ENCODE measurements at regions of chr17 and their contacts with region 1.

Region 1: DNA sequence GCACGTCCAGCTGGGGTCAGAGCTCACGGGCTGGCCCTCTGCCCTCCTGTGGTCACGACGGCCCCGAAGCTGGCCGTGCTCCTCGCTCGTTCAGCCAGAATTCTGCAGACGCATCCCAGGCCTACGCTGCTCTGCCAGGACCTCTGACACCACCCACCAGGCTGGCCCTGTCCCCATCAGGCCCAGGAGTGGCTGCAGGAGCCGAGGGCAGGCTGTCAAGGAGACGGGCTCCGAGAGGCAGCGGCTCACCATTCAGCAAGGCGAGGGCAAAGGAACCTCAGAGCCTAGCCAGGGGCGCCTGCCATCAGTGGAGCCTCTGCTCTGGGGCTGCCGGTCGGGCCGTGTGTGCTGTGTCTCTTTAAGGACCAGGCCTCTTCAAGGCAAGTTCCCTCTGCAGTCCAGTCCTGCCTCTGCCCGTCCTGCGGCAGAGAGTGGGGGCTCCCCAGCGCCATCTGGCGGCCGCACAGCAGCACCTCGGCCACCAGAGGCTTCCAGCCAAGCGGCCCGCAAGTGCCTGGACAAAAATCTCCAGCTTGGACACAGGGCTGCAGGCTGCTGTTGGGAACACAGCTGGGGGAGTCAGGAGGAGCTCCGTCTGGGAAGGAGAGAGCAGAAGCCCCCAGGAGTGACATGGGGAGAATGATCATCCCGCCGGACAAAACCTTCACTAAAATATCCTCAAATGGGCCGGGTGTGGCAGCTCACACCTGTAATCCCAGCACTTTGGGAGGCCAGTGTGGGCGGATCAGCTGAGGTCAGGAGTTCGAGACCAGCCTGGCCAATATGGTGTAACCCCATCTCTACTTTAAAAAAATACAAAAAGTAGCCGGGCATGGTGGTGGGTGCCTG is 7.4 kb upstream of the ABR start:
- DNase-seq: peak; percentile 58 to 76
- ATAC-seq: peak; percentile 80 to 87
- H3K4me3 ChIP-seq: peak overlapping the region in 3 of 4 donors; percentile 10 to 47 (median 28)
- H3K27ac ChIP-seq: peak overlapping the region; percentile 47 to 68 (median 49)
- H3K4me1 ChIP-seq: peaks cover 22 to 32% of the 10 kb centered on the region in 2 donors
- H3K27me3 ChIP-seq: peaks cover 0 to 8% (median 0%) of the 10 kb centered on the region in 3 donors
- CTCF ChIP-seq: peak; percentile 92 to 99 (median 97)
- POLR2A ChIP-seq: no peak

Region 2: GRCh38 chr17:622356-622755 is 564.8 kb before region 1 on chr17:
- in situ Hi-C with region 1: no loop called
- intact Hi-C with region 1: no loop called
- DNase-seq: no peak
- ATAC-seq: no peak
- H3K4me3 ChIP-seq: no peak overlapping the region
- H3K27ac ChIP-seq: no peak overlapping the region
- H3K4me1 ChIP-seq: no peaks in the 10 kb centered on the region
- H3K27me3 ChIP-seq: no peaks in the 10 kb centered on the region
- CTCF ChIP-seq: no peak
- POLR2A ChIP-seq: no peak

Region 3: DNA sequence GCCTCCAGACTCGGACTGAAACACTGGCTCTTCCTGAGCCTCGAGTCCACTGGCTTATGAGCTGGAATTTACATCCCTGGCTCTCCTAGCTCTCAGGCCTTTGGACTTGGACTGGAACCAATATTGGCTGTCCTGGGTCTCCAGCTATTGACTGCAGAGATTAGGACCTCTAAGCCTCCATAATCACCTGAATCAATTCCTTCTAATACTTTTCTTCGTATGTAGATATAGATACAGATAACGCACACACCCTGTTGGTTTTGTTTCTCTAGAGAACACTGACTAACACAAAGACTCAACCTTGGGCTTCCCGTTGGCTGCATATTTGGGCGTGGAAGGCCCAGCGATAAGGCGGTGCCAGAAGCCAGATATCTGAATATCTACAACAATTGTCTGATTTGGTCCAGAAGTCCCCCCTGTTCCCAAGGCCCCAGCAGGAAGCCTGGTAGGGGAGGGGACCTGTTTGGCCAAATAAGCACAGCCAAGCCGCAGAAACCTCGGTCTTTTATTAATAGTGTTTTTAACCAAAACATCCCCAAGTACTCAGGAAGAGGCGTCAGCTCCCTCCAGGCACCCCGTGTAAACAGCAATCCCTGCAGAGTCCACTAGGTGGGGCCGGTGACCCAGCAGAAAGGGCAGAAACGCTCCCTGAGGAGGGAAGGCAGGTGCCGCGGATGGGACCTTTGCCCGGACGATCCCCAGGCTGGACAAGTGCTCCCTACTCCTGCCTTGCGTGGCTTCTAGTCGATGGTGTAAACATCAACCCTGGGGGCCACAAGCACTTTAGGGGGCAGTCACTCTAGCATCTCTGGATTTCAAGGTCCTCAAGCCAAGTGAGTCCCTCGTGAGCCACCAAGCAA is 64.4 kb before region 1 on chr17:
- in situ Hi-C with region 1: loop called in 3 of 4 experiments (anchors 5 to 10 kb)
- intact Hi-C with region 1: loop called (anchors 1 kb)
- DNase-seq: peak; percentile 68 to 69
- ATAC-seq: peak; percentile 83 to 84
- H3K4me3 ChIP-seq: no peak overlapping the region
- H3K27ac ChIP-seq: peak overlapping the region; percentile 27 to 71 (median 62)
- H3K4me1 ChIP-seq: peaks cover 7 to 11% of the 10 kb centered on the region in 2 donors
- H3K27me3 ChIP-seq: peaks cover 0 to 9% (median 0%) of the 10 kb centered on the region in 3 donors
- CTCF ChIP-seq: peak; percentile 88 to 94 (median 92)
- POLR2A ChIP-seq: no peak

Region 4: DNA sequence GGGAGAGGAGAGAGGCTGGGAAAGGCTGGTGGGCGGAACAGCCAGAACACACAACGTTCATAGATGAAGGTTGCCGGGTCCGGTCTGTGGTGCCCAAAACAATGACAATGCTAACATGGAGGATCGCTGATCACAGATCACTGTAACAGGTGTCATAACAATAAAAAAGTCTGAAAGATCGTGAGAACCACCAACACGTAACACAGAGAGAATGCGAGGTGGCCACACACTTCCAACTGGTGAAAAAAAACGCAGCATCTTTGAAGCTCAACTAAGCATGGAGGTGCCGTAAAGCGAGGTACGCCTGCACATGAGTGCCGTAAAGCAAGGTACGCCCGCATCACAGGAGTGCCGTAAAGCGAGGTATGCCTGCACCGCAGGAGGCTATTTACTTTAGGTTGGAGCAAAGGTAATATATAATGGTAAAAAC is 49.7 kb before region 1 on chr17:
- in situ Hi-C with region 1: loop called in 1 of 4 experiments (anchors 10 kb)
- intact Hi-C with region 1: no loop called
- DNase-seq: no peak
- ATAC-seq: no peak
- H3K4me3 ChIP-seq: no peak overlapping the region
- H3K27ac ChIP-seq: no peak overlapping the region
- H3K4me1 ChIP-seq: peaks cover 3 to 10% of the 10 kb centered on the region in 2 donors
- H3K27me3 ChIP-seq: peaks cover 0 to 12% (median 5%) of the 10 kb centered on the region in 3 donors
- CTCF ChIP-seq: no peak
- POLR2A ChIP-seq: no peak

Region 5: GRCh38 chr17:1154704-1155103 is 32.4 kb before region 1 on chr17:
- in situ Hi-C with region 1: no loop called
- intact Hi-C with region 1: no loop called
- DNase-seq: no peak
- ATAC-seq: no peak
- H3K4me3 ChIP-seq: no peak overlapping the region
- H3K27ac ChIP-seq: no peak overlapping the region
- H3K4me1 ChIP-seq: no peaks in the 10 kb centered on the region
- H3K27me3 ChIP-seq: peaks cover 0 to 2% (median 0%) of the 10 kb centered on the region in 3 donors
- CTCF ChIP-seq: no peak
- POLR2A ChIP-seq: no peak

Region 6: DNA sequence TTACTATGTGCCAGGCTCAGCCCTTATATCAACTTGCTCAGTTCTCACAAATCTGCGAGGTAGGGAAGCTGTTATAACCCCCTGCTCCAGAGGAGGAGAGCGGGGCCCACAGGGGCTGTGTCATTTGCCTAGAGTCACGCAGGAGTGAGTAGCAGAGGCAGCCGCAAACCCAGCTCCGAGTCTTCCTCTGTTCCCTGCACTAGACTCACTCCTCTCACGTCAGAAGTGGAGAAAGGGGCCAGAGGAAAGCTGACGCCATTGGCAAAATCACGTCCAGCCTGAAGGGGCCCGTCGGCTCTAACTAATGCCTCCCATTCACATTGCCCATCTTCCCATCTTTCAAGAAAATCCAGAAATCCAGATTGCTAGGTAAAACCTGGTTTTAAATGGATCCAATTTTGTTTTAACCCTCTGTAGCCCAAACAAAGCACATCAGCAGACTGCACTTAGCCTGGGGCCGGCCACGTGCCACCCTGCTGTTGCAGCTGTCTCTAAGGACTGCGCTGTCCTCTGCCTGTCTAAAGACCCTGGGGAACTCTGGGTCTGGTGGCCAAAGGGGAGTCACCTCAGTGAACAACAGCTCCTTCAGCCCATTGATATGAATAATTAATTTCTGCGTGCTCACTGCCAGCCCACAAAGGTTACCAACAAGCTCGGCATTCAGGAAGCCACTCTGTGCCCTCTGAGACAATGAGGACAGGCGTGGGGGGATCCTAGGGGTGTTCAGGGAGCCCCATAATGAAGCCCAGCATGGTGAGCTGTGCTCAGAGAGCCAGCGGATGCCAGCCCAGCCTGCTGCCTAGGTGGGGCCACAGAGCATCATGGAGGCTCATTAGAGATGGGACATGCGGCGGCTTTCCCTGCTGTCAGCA is 29.3 kb after region 1 on chr17:
- in situ Hi-C with region 1: no loop called
- intact Hi-C with region 1: no loop called
- DNase-seq: no peak
- ATAC-seq: no peak
- H3K4me3 ChIP-seq: no peak overlapping the region
- H3K27ac ChIP-seq: no peak overlapping the region
- H3K4me1 ChIP-seq: no peaks in the 10 kb centered on the region
- H3K27me3 ChIP-seq: peaks cover 16 to 24% (median 16%) of the 10 kb centered on the region in 3 donors
- CTCF ChIP-seq: no peak
- POLR2A ChIP-seq: no peak

Measured in gastrocnemius medialis (tissue), 4 donors.